Sigmoid colon (tissue), 7 donors: ENCODE measurements at regions of chr6 and their contacts with region 1.

Region 1: GRCh38 chr6:89161326-89162046 is 15.6 kb downstream of the PM20D2 start:
- DNase-seq: no peak
- H3K4me3 ChIP-seq: peak overlapping the region in 2 of 4 donors; percentile 9 to 10
- H3K27ac ChIP-seq: peak overlapping the region; percentile 79 to 94 (median 86)
- H3K4me1 ChIP-seq: peaks cover 0 to 37% (median 34%) of the 10 kb centered on the region in 4 donors
- H3K27me3 ChIP-seq: no peaks in the 10 kb centered on the region
- CTCF ChIP-seq: no peak
- EP300 ChIP-seq: peak in 1 of 4 donors; percentile 35
- POLR2A ChIP-seq: no peak

Region 2: DNA sequence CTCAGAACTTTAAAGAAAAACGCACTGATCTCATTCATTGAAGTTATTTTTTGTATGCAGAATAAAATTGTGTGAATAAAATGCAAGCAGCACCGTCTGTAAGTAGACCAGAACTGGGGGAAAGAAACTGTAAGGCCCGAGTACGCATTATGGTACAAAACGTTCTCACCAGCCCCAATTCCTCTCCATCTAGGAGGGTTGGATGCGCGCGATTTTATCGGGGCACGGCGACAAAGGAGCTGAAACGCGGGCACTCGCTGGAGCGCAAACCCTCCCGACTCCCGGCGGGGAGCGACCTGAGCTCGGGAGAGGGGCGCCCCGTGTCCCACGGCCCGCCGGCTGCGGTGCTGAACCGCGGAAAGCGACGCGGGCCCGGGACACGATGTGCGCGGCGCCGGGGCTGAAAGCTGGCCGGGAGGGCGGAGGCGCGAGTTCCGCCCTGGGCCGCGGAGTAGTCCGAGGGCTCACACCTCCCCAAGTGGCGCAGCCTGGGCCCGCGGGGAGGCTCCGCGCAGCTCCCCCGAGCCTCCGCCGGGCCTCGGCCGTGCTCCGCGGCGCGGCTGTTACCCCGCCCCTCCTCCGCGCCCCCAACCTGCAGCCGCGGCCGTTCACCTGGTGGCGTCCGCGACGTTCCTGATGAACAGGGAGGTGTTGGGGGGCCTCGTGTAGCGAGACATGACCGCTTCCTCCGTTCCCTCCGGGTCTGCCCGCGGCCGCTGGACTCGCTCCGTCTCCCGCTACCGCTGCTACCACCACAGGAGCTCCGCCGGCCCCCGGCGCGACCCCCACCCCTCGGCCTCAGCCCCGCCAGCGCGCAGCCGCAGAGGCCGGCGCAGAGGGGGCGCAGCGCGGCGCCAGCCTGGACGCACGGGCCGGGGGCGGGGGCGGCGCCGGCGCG is 44.0 kb before region 1 on chr6 and contains the start of gene SRSF12:
- intact Hi-C with region 1: loop called (anchors 5 kb)
- DNase-seq: no peak
- H3K4me3 ChIP-seq: peak within 1 kb of the TSS; percentile 55 to 79 (median 76)
- H3K27ac ChIP-seq: peak within 1 kb of the TSS; percentile 62 to 80 (median 70)
- H3K4me1 ChIP-seq: peaks cover 0 to 19% (median 9%) of the 10 kb centered on the region in 4 donors
- H3K27me3 ChIP-seq: no peaks in the 10 kb centered on the region
- CTCF ChIP-seq: peak in 1 of 4 experiments; percentile 7
- EP300 ChIP-seq: no peak
- POLR2A ChIP-seq: no peak
- total RNA-seq, gene SRSF12: 0.82 to 3.6 (median 1.1) TPM